Activated CD4-positive, alpha-beta T cell treated with anti-CD3 and anti-CD28 coated beads for 36 hours (primary cell): ENCODE measurements at regions of chrX and their contacts with region 1.

Region 1: GRCh38 chrX:41333744-41334259 is at the start of gene DDX3X:
- DNase-seq: peak; percentile 89
- ATAC-seq: peak; percentile 62
- H3K4me3 Mint-ChIP-seq: peak within 1 kb of the TSS; percentile 90
- H3K27ac Mint-ChIP-seq: peak within 1 kb of the TSS; percentile 99
- H3K4me1 Mint-ChIP-seq: peaks cover 20% of the 10 kb centered on the region
- H3K27me3 Mint-ChIP-seq: no peaks in the 10 kb centered on the region
- total RNA-seq, gene DDX3X: 118 to 207 TPM

Region 2: GRCh38 chrX:40169193-40170101 is 1164.4 kb before region 1 on chrX:
- CTCF ChIA-PET with region 1: no interaction called
- POLR2A ChIA-PET with region 1: no interaction called
- intact Hi-C with region 1: loop called in 1 of 2 experiments (anchors 5 kb)
- DNase-seq: peak; percentile 89
- ATAC-seq: peak; percentile 67
- H3K4me3 Mint-ChIP-seq: peak overlapping the region; percentile 80
- H3K27ac Mint-ChIP-seq: peak overlapping the region; percentile 90
- H3K4me1 Mint-ChIP-seq: peaks cover 37% of the 10 kb centered on the region
- H3K27me3 Mint-ChIP-seq: no peaks in the 10 kb centered on the region

Region 3: GRCh38 chrX:40735325-40736169 is 598.3 kb before region 1 on chrX and contains the start of gene MED14:
- CTCF ChIA-PET with region 1: no interaction called
- POLR2A ChIA-PET with region 1: no interaction called
- intact Hi-C with region 1: loop called in 1 of 2 experiments (anchors 1 kb)
- DNase-seq: peak; percentile 95
- ATAC-seq: peak; percentile 93
- H3K4me3 Mint-ChIP-seq: peak within 1 kb of the TSS; percentile 84
- H3K27ac Mint-ChIP-seq: peak within 1 kb of the TSS; percentile 96
- H3K4me1 Mint-ChIP-seq: peaks cover 43% of the 10 kb centered on the region
- H3K27me3 Mint-ChIP-seq: no peaks in the 10 kb centered on the region
- total RNA-seq, gene MED14: 51.0 to 60.1 TPM

Region 4: GRCh38 chrX:41265615-41266014 is 68.2 kb before region 1 on chrX:
- CTCF ChIA-PET with region 1: no interaction called
- POLR2A ChIA-PET with region 1: interaction called, 7 read pairs
- intact Hi-C with region 1: loop called (anchors 1 kb)
- DNase-seq: peak; percentile 84
- ATAC-seq: peak; percentile 98
- H3K4me3 Mint-ChIP-seq: no peak overlapping the region
- H3K27ac Mint-ChIP-seq: no peak overlapping the region
- H3K4me1 Mint-ChIP-seq: peaks cover 5% of the 10 kb centered on the region
- H3K27me3 Mint-ChIP-seq: no peaks in the 10 kb centered on the region

Region 5: GRCh38 chrX:41381685-41382084 is 47.9 kb after region 1 on chrX:
- CTCF ChIA-PET with region 1: interaction called, 3 read pairs
- POLR2A ChIA-PET with region 1: interaction called, 9 read pairs
- intact Hi-C with region 1: loop called (anchors 2 kb)
- DNase-seq: no peak
- ATAC-seq: no peak
- H3K4me3 Mint-ChIP-seq: no peak overlapping the region
- H3K27ac Mint-ChIP-seq: peak overlapping the region; percentile 13
- H3K4me1 Mint-ChIP-seq: peaks cover 36% of the 10 kb centered on the region
- H3K27me3 Mint-ChIP-seq: no peaks in the 10 kb centered on the region